ENCODE measurements at regions of chr2 and their contacts with region 1.

Region 1: DNA sequence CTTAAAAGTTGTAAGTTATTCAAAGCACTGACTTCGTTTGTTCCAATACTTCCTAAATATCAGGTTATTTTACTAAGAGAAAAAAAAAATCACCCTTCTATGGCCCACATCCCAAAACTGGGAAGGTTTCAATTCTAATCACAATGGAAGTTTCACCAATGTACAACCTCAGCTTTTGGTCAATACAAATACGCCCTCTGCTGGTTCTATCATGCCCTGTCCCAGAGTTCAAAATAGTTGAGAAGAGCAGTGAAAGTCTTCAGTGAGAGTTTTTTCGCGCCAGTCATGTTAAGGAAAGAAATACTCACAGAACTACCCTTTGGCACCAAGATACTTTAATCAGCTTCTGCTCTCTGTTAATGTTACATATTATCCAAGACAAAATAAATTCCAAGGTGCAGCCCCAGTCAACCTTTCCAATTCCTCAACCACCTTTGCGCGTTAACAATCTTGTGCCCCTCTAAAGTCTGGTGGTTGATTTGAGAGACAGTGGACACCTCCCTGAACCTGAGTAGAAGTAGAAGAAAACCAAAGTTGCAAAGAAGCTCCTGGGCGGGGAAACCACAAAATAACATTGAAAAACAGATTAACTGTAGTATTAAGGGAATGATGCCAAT is 59.9 kb downstream of the SUMO1 start:
- DNase-seq: peak; percentile 46
- H3K4me3 ChIP-seq: no peak overlapping the region
- H3K27ac ChIP-seq: no peak overlapping the region
- H3K4me1 ChIP-seq: no peaks in the 10 kb centered on the region
- H3K27me3 ChIP-seq: no peaks in the 10 kb centered on the region
- CTCF ChIP-seq: peak; percentile 76 to 85

Region 2: GRCh38 chr2:201668402-201668910 is 510.0 kb before region 1 on chr2:
- CTCF ChIA-PET with region 1: no interaction called
- dilution Hi-C with region 1: no loop called
- in situ Hi-C with region 1: no loop called
- intact Hi-C with region 1: loop called (anchors 5 kb)
- DNase-seq: no peak
- H3K4me3 ChIP-seq: no peak overlapping the region
- H3K27ac ChIP-seq: no peak overlapping the region
- H3K4me1 ChIP-seq: no peaks in the 10 kb centered on the region
- H3K27me3 ChIP-seq: no peaks in the 10 kb centered on the region
- CTCF ChIP-seq: no peak

Region 3: GRCh38 chr2:201780674-201781581 is 397.5 kb before region 1 on chr2 and contains the start of gene ALS2:
- CTCF ChIA-PET with region 1: no interaction called
- dilution Hi-C with region 1: no loop called
- in situ Hi-C with region 1: no loop called
- intact Hi-C with region 1: loop called (anchors 1 kb)
- DNase-seq: peak; percentile 99
- H3K4me3 ChIP-seq: peak within 1 kb of the TSS; percentile 73 to 95 (median 85)
- H3K27ac ChIP-seq: peak within 1 kb of the TSS; percentile 93
- H3K4me1 ChIP-seq: peaks cover 22% of the 10 kb centered on the region
- H3K27me3 ChIP-seq: no peaks in the 10 kb centered on the region
- CTCF ChIP-seq: no peak
- total RNA-seq, gene ALS2: 46.2 to 53.3 TPM

Region 4: GRCh38 chr2:201964631-201965206 is 213.7 kb before region 1 on chr2:
- CTCF ChIA-PET with region 1: no interaction called
- dilution Hi-C with region 1: no loop called
- in situ Hi-C with region 1: no loop called
- intact Hi-C with region 1: loop called (anchors 5 kb)
- DNase-seq: no peak
- H3K4me3 ChIP-seq: no peak overlapping the region
- H3K27ac ChIP-seq: no peak overlapping the region
- H3K4me1 ChIP-seq: no peaks in the 10 kb centered on the region
- H3K27me3 ChIP-seq: no peaks in the 10 kb centered on the region
- CTCF ChIP-seq: no peak

Region 5: DNA sequence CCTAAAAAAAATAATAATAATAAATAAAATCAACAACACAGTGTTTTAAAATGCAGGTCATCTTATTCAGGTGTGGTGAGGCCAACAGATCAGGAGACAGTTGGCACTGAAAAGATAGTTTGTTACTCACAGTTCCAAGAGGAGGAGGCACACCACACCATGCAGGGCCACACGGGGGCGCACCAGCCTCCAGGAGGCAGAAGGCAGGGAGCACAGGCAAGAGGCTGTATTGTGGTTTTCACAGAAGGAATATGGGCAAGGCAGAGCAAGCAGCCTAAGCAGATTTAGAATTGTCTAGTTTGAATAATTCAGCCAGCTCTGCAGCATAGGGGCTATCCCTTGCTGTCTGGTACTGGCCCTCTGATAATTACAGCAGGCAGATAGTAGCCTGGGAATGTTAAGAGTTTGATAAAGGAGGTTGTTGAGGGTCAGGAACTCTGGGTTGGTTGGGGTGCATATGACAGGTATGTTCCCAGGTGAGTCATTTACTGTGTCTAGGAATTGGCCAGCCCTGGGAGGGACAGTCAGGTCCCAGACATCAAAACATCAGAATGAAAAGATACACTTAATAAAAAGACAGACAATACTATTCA is 74.1 kb before region 1 on chr2:
- CTCF ChIA-PET with region 1: no interaction called
- dilution Hi-C with region 1: no loop called
- in situ Hi-C with region 1: no loop called
- intact Hi-C with region 1: loop called (anchors 1 kb)
- DNase-seq: peak; percentile 57
- H3K4me3 ChIP-seq: no peak overlapping the region
- H3K27ac ChIP-seq: no peak overlapping the region
- H3K4me1 ChIP-seq: no peaks in the 10 kb centered on the region
- H3K27me3 ChIP-seq: no peaks in the 10 kb centered on the region
- CTCF ChIP-seq: peak; percentile 76 to 79

Measured in mammary epithelial cell (primary cell).